CD8-positive, alpha-beta T cell (primary cell): ENCODE measurements at regions of chr20 and their contacts with region 1.

Region 1: DNA sequence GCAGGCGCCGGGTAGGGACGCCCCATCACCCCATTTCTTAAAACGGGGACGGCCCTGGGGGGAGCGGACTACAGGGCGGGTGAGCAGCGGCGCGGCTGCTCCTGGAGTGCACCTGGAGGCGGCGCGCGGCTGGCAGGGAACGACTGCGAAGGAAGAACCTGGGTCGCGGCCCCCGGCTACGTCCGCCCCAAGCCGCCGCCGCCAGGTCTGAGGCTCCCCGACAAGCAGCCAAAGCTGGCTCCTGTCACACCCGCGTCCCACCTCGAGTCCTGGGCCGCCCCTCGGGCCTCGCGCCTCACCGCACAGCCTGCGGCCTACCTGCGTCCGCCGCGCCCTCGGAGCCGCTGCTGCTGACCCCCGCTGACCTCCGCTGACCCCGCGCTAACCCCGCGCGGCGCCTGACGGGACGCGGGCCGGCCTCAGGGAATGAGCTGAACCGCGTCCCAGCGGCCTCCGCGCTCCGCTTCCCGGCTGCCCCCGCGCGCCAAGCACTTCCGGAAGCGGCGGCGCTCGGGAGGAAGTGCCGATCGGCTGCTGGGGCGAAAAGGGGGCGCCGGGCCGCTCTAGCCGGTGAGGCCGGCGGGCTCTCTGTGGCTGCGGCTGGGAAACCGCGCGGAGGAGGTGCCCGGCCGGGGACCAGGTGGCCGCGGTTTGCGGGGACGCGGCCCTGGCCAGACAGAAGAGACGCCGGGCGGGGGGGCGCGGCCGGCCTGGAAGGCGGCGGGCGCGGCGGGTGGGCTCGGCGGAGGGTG is at the starts of genes ARFRP1 and ZGPAT:
- DNase-seq: peak; percentile 70 to 94 (median 86)
- ATAC-seq: peak; percentile 79
- H3K4me3 ChIP-seq: peak within 1 kb of the TSS; percentile 67 to 97
- H3K4me3 Mint-ChIP-seq: peak within 1 kb of the TSS; percentile 90
- H3K27ac ChIP-seq: peak within 1 kb of the TSS; percentile 51 to 71
- H3K27ac Mint-ChIP-seq: peak within 1 kb of the TSS; percentile 90
- H3K4me1 ChIP-seq: peaks cover 43% of the 10 kb centered on the region
- H3K4me1 Mint-ChIP-seq: peaks cover 42% of the 10 kb centered on the region
- H3K27me3 ChIP-seq: no peaks in the 10 kb centered on the region
- H3K27me3 Mint-ChIP-seq: no peaks in the 10 kb centered on the region
- CTCF ChIP-seq: no peak
- total RNA-seq, gene ARFRP1: 25.1 to 28.6 TPM
- total RNA-seq, gene ZGPAT: 25.5 to 25.7 TPM

Region 2: GRCh38 chr20:63381807-63382322 is 325.9 kb before region 1 on chr20:
- CTCF ChIA-PET with region 1: no interaction called
- POLR2A ChIA-PET with region 1: no interaction called
- intact Hi-C with region 1: no loop called
- DNase-seq: peak in 7 of 9 experiments; percentile 6 to 58 (median 46)
- ATAC-seq: peak; percentile 51
- H3K4me3 ChIP-seq: no peak overlapping the region
- H3K4me3 Mint-ChIP-seq: no peak overlapping the region
- H3K27ac ChIP-seq: no peak overlapping the region
- H3K27ac Mint-ChIP-seq: no peak overlapping the region
- H3K4me1 ChIP-seq: no peaks in the 10 kb centered on the region
- H3K4me1 Mint-ChIP-seq: peaks cover 3% of the 10 kb centered on the region
- H3K27me3 ChIP-seq: no peaks in the 10 kb centered on the region
- H3K27me3 Mint-ChIP-seq: peaks cover 14% of the 10 kb centered on the region
- CTCF ChIP-seq: peak; percentile 77

Region 3: GRCh38 chr20:63696628-63697290 is 11.0 kb before region 1 on chr20 and contains the start of gene TNFRSF6B:
- CTCF ChIA-PET with region 1: interaction called, 4 read pairs
- POLR2A ChIA-PET with region 1: interaction called, 10 read pairs
- intact Hi-C with region 1: no loop called
- DNase-seq: peak in 2 of 9 experiments; percentile 34 to 37
- ATAC-seq: peak; percentile 41
- H3K4me3 ChIP-seq: peak within 1 kb of the TSS; percentile 28 to 49
- H3K4me3 Mint-ChIP-seq: peak within 1 kb of the TSS; percentile 54
- H3K27ac ChIP-seq: no peak within 1 kb of the TSS
- H3K27ac Mint-ChIP-seq: peak within 1 kb of the TSS; percentile 28
- H3K4me1 ChIP-seq: peaks cover 31% of the 10 kb centered on the region
- H3K4me1 Mint-ChIP-seq: peaks cover 14% of the 10 kb centered on the region
- H3K27me3 ChIP-seq: no peaks in the 10 kb centered on the region
- H3K27me3 Mint-ChIP-seq: no peaks in the 10 kb centered on the region
- CTCF ChIP-seq: no peak
- total RNA-seq, gene TNFRSF6B: 2.0 to 3.0 TPM

Region 4: DNA sequence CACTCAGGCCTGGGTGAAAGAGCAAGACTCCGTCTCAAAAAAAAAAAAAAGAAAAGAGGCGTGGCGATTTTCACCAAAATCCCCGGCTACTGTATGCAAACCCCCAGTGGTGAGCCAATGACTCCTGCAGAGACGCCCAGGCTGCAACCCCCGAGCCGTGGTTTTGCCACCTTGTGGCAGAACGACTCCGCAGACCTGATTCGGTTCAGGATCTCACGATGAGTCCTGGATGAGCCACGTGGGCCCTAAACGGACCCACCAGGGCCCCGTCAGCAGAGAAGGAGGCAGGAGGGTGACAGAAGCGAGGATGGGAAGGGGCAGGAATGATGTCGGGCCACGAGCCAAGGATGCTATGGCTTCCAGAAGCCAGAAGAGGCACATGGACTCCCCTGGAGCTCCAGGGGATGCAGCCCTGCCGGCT is 74.3 kb after region 1 on chr20:
- CTCF ChIA-PET with region 1: interaction called, 39 read pairs
- POLR2A ChIA-PET with region 1: interaction called, 3 read pairs
- intact Hi-C with region 1: loop called (anchors 1 kb)
- DNase-seq: peak in 8 of 9 experiments; percentile 11 to 93 (median 76)
- ATAC-seq: peak; percentile 94
- H3K4me3 ChIP-seq: no peak overlapping the region
- H3K4me3 Mint-ChIP-seq: peak overlapping the region; percentile 39
- H3K27ac ChIP-seq: peak overlapping the region in 1 of 2 experiments; percentile 50
- H3K27ac Mint-ChIP-seq: peak overlapping the region; percentile 81
- H3K4me1 ChIP-seq: peaks cover 12% of the 10 kb centered on the region
- H3K4me1 Mint-ChIP-seq: peaks cover 18% of the 10 kb centered on the region
- H3K27me3 ChIP-seq: no peaks in the 10 kb centered on the region
- H3K27me3 Mint-ChIP-seq: no peaks in the 10 kb centered on the region
- CTCF ChIP-seq: peak; percentile 23

Region 5: DNA sequence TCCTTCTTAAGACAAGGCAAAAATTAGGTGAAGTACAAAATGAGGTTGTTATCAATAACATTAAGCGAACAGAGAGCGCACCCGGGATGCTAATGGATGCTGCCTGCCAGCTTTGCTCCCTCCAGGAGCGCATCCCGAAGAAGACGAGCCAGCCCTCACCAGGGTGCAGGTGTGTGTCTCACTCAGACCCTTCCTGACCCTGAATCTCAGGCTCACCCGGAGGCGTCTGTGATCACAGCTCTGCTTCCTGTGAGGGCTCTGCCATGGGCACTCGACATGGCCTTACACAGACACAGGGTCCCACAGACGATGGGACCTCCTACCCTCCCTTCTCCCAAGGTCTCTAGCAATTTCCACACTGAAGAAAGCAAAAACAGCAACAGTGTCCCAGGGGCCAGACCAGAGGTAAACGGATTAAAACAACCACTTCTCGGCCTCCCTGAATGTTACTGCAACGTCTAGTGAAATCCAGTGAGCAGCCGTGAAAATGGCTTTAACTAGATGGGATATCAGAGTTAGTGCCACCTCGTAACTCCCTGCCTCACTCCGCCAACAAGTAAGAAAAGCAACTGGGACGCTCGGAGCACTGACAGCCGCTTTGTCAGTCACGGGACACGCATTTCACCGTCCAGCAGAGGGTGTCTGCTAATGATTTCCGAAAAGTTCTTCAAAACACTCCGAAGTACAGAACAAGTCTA is 111.6 kb after region 1 on chr20:
- CTCF ChIA-PET with region 1: no interaction called
- POLR2A ChIA-PET with region 1: no interaction called
- intact Hi-C with region 1: no loop called
- DNase-seq: peak in 2 of 9 experiments; percentile 21 to 23
- ATAC-seq: no peak
- H3K4me3 ChIP-seq: no peak overlapping the region
- H3K4me3 Mint-ChIP-seq: peak overlapping the region; percentile 4
- H3K27ac ChIP-seq: no peak overlapping the region
- H3K27ac Mint-ChIP-seq: peak overlapping the region; percentile 20
- H3K4me1 ChIP-seq: no peaks in the 10 kb centered on the region
- H3K4me1 Mint-ChIP-seq: no peaks in the 10 kb centered on the region
- H3K27me3 ChIP-seq: peaks cover 0 to 4% of the 10 kb centered on the region in 2 experiments
- H3K27me3 Mint-ChIP-seq: peaks cover 6% of the 10 kb centered on the region
- CTCF ChIP-seq: no peak

Region 6: GRCh38 chr20:63864847-63865640 is 157.3 kb after region 1 on chr20 and contains the start of gene TPD52L2:
- CTCF ChIA-PET with region 1: interaction called, 3 read pairs
- POLR2A ChIA-PET with region 1: interaction called, 6 read pairs
- intact Hi-C with region 1: loop called (anchors 1 kb)
- DNase-seq: peak; percentile 95 to 99 (median 97)
- ATAC-seq: peak; percentile 89
- H3K4me3 ChIP-seq: peak within 1 kb of the TSS; percentile 62 to 95
- H3K4me3 Mint-ChIP-seq: peak within 1 kb of the TSS; percentile 98
- H3K27ac ChIP-seq: peak within 1 kb of the TSS; percentile 59 to 86
- H3K27ac Mint-ChIP-seq: peak within 1 kb of the TSS; percentile 97
- H3K4me1 ChIP-seq: peaks cover 23% of the 10 kb centered on the region
- H3K4me1 Mint-ChIP-seq: peaks cover 34% of the 10 kb centered on the region
- H3K27me3 ChIP-seq: no peaks in the 10 kb centered on the region
- H3K27me3 Mint-ChIP-seq: no peaks in the 10 kb centered on the region
- CTCF ChIP-seq: no peak
- total RNA-seq, gene TPD52L2: 18.7 to 19.4 TPM

Region 7: DNA sequence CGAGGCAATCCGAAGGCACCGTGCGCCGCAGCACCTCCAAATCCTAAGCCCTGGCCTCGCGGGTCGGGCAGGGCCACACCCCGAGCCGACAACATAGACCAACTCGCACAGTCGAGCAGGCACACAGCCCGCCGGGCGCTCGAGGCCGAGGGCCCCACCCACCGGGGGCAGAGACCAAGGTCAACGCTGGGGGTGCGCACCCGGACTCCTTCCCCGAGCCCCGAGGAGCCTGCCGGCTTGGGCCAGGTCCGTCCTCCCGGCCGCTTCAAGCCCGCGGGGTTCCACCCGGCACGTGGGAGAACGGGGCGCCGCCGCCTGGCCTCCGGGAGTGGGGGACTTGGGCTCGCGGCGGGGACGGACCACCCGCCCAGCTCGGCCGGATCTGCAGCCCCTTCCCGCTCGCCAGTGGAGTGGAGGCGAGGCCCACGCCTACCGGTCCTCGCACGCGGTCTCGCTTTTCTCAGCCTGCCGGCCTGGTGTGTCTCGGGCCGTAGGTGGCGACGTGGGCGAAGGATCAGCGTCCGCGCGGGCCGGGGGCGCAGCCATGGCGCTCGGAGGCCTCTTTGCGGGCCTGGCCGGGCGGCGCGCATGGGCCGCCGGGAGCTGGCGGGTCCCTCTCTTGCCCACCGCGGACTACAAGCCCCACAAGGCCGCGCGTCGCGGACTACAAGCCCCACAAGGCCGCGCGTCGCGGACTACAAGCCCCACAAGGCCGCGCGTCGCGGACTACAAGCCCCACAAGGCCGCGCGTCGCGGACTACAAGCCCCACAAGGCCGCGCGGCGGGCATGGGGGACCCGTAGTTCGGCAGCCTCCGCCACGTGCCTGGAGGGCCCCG is 248.3 kb after region 1 on chr20 and contains the start of gene UCKL1:
- CTCF ChIA-PET with region 1: no interaction called
- POLR2A ChIA-PET with region 1: no interaction called
- intact Hi-C with region 1: loop called (anchors 1 to 5 kb)
- DNase-seq: peak; percentile 78 to 93 (median 89)
- ATAC-seq: peak; percentile 81
- H3K4me3 ChIP-seq: peak within 1 kb of the TSS; percentile 73 to 95
- H3K4me3 Mint-ChIP-seq: peak within 1 kb of the TSS; percentile 82
- H3K27ac ChIP-seq: peak within 1 kb of the TSS; percentile 64 to 77
- H3K27ac Mint-ChIP-seq: peak within 1 kb of the TSS; percentile 76
- H3K4me1 ChIP-seq: peaks cover 28% of the 10 kb centered on the region
- H3K4me1 Mint-ChIP-seq: peaks cover 34% of the 10 kb centered on the region
- H3K27me3 ChIP-seq: no peaks in the 10 kb centered on the region
- H3K27me3 Mint-ChIP-seq: no peaks in the 10 kb centered on the region
- CTCF ChIP-seq: no peak
- total RNA-seq, gene UCKL1: 29.6 to 33.7 TPM

Region 8: GRCh38 chr20:64062596-64063388 is 355.1 kb after region 1 on chr20 and contains the start of gene TCEA2:
- CTCF ChIA-PET with region 1: no interaction called
- POLR2A ChIA-PET with region 1: no interaction called
- intact Hi-C with region 1: loop called in 1 of 2 experiments (anchors 1 kb)
- DNase-seq: peak; percentile 84 to 97 (median 93)
- ATAC-seq: peak; percentile 94
- H3K4me3 ChIP-seq: peak within 1 kb of the TSS; percentile 47 to 68
- H3K4me3 Mint-ChIP-seq: peak within 1 kb of the TSS; percentile 82
- H3K27ac ChIP-seq: peak within 1 kb of the TSS; percentile 42 to 67
- H3K27ac Mint-ChIP-seq: peak within 1 kb of the TSS; percentile 63
- H3K4me1 ChIP-seq: peaks cover 48% of the 10 kb centered on the region
- H3K4me1 Mint-ChIP-seq: peaks cover 36% of the 10 kb centered on the region
- H3K27me3 ChIP-seq: no peaks in the 10 kb centered on the region
- H3K27me3 Mint-ChIP-seq: no peaks in the 10 kb centered on the region
- CTCF ChIP-seq: no peak
- total RNA-seq, gene TCEA2: 18.2 to 18.4 TPM